Activated T-helper 1 cell treated with anti-CD3 and anti-CD28 coated beads, Interleukin-12 subunit alpha, Interleukin-12 subunit beta, Interleukin-2, Interleukin-4 antibody, amounts not matched to agents 30 ng/mL and 10 ng/mL and 1 ng/mL, durations not matched to agents 14 hours and 24 hours and 36 hours (primary cell): ENCODE measurements at regions of chr11 and their contacts with region 1.

Region 1: GRCh38 chr11:61129639-61130523 is 27.6 kb downstream of the CD5 start:
- DNase-seq: peak; percentile 82
- H3K4me3 Mint-ChIP-seq: peak overlapping the region; percentile 63
- H3K27ac Mint-ChIP-seq: peak overlapping the region; percentile 65
- H3K4me1 Mint-ChIP-seq: peaks cover 16% of the 10 kb centered on the region
- H3K27me3 Mint-ChIP-seq: no peaks in the 10 kb centered on the region

Region 2: GRCh38 chr11:60831143-60831500 is 298.8 kb before region 1 on chr11:
- intact Hi-C with region 1: loop called (anchors 2 kb)
- DNase-seq: peak; percentile 62
- H3K4me3 Mint-ChIP-seq: no peak overlapping the region
- H3K27ac Mint-ChIP-seq: no peak overlapping the region
- H3K4me1 Mint-ChIP-seq: peaks cover 12% of the 10 kb centered on the region
- H3K27me3 Mint-ChIP-seq: no peaks in the 10 kb centered on the region

Region 3: DNA sequence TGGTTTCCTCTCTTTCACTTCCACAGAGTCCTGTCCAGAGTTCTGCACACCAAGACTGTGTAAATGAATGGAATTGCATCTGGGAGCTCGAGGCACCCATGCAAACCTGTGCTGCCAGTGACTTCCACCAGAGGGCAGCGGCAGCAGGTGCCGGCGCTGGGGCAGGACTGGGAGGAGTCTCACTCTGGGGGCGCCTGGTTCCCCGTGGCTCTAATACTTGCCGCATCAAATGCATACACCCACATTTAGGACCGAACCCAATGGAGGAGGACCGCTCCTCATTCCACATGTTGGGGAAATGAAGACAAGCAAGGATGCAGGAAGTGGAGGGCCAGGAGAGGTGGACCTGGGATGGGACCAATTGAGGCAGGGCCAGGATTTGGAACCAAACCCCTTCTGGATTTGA is 159.5 kb before region 1 on chr11:
- intact Hi-C with region 1: loop called (anchors 1 kb)
- DNase-seq: peak; percentile 68
- H3K4me3 Mint-ChIP-seq: peak overlapping the region; percentile 47
- H3K27ac Mint-ChIP-seq: no peak overlapping the region
- H3K4me1 Mint-ChIP-seq: peaks cover 43% of the 10 kb centered on the region
- H3K27me3 Mint-ChIP-seq: peaks cover 12% of the 10 kb centered on the region

Region 4: GRCh38 chr11:61083601-61084147 is 46.2 kb before region 1 on chr11:
- intact Hi-C with region 1: loop called (anchors 2 kb)
- DNase-seq: peak; percentile 75
- H3K4me3 Mint-ChIP-seq: peak overlapping the region; percentile 88
- H3K27ac Mint-ChIP-seq: peak overlapping the region; percentile 99
- H3K4me1 Mint-ChIP-seq: peaks cover 67% of the 10 kb centered on the region
- H3K27me3 Mint-ChIP-seq: no peaks in the 10 kb centered on the region

Region 5: GRCh38 chr11:61111786-61112517 is 17.9 kb before region 1 on chr11:
- intact Hi-C with region 1: loop called (anchors 2 kb)
- DNase-seq: peak; percentile 70
- H3K4me3 Mint-ChIP-seq: peak overlapping the region; percentile 84
- H3K27ac Mint-ChIP-seq: peak overlapping the region; percentile 89
- H3K4me1 Mint-ChIP-seq: peaks cover 99% of the 10 kb centered on the region
- H3K27me3 Mint-ChIP-seq: no peaks in the 10 kb centered on the region